Calu3 (cell line): ENCODE measurements at regions of chr6 and their contacts with region 1.

Region 1: DNA sequence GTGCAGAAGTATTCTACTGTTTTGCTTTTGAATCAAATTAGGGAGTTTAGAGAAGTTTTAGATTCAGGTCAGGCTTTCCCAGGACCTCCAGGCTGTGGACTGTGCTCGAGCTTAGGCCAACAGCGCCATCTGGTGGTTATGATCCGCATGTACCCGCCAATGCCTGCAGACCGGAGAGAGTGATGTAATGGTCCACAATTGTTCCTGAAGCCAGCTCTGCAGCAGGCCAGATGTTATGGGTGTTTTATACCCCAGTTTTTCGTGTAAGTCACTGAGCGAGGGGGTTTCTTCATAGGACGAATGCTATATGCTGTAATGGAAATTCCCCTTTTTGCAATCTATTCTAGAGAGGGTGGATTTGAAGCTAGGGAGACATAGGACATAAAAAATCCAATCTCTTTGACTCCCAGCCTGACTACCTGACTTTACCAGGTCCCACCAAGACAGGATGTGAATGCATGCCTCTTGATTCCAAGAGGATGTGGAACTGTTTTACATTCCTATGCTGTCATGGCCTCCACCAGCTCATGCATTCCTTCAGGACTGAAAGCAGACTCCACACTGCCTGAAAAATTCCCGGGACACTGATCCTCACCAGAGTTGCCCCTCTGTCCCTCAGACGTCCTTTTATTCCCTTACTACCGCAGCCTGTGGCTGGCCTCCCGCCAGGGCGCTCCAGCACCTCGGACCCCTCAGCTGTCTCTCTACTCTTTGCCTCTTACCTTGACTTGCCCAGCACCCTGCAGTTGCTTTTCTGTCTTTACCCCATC is 41.2 kb upstream of the LY86 start:
- DNase-seq: peak; percentile 81
- H3K4me3 Mint-ChIP-seq: peak overlapping the region; percentile 48
- H3K27ac Mint-ChIP-seq: peak overlapping the region; percentile 36
- H3K4me1 Mint-ChIP-seq: peaks cover 7% of the 10 kb centered on the region
- H3K27me3 Mint-ChIP-seq: peaks cover 74% of the 10 kb centered on the region
- CTCF ChIP-seq: peak; percentile 80

Region 2: DNA sequence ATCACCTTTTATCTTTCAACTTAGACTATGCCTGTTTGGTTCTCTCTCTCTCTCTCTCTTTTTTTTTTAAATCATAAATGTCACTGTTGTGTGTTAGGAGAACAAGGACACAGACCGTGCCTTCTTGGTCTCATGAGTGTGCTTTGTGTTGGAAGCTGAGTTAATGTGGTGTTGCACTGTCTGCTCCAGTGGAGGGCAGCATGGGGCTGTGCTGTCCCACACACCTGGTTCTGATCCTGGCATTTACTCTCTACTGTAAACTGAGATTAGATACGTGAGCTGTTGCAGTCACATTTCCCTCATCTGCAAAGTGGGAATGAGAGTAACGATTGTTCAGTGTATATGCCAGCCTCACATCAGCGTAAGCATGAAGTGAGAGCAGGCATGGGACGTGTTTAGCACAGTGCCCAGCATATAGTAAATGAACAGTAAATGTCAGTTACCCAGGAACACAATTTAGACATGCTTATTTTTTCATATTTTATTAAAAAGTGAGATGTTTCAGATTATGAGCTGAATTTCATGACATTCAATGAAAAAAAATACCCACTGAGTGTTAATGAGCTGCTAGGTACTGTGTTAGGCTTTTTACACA is 1124.9 kb before region 1 on chr6:
- CTCF ChIA-PET with region 1: no interaction called
- intact Hi-C with region 1: loop called (anchors 10 kb)
- DNase-seq: peak; percentile 19
- H3K4me3 Mint-ChIP-seq: no peak overlapping the region
- H3K27ac Mint-ChIP-seq: no peak overlapping the region
- H3K4me1 Mint-ChIP-seq: no peaks in the 10 kb centered on the region
- H3K27me3 Mint-ChIP-seq: no peaks in the 10 kb centered on the region
- CTCF ChIP-seq: no peak

Region 3: GRCh38 chr6:5968817-5969734 is 578.2 kb before region 1 on chr6:
- CTCF ChIA-PET with region 1: no interaction called
- intact Hi-C with region 1: loop called (anchors 5 kb)
- DNase-seq: peak; percentile 51
- H3K4me3 Mint-ChIP-seq: no peak overlapping the region
- H3K27ac Mint-ChIP-seq: no peak overlapping the region
- H3K4me1 Mint-ChIP-seq: peaks cover 11% of the 10 kb centered on the region
- H3K27me3 Mint-ChIP-seq: no peaks in the 10 kb centered on the region
- CTCF ChIP-seq: no peak

Region 4: DNA sequence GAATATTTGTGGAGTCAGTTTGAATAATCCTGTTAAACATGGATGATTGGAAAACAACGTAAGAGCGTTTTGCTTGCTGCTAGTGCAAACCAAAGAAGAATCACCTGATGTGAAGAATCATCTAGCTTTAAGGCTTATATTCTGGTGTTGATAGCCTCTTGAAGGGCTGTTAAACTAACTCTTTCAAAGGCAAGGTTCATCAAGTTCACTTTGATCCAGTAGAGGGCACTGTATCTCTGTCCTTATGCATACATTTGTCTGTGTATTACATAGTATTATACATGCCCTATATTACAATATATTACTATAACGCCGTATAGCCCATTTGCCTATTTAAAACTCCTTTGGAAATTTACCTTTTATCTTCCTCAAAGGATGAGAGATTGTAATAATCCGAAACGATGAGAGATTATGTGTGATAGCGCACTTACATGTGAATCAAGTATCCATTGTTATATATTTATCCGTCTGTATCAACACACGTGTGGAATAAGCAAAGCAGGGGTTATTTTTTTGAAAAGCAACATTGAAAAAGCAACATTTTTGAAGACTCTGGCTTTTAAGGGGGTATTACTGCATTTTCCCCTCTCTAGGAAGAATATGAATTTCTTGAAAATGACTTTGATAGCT is 489.8 kb before region 1 on chr6:
- CTCF ChIA-PET with region 1: no interaction called
- intact Hi-C with region 1: loop called (anchors 1 kb)
- DNase-seq: peak; percentile 4
- H3K4me3 Mint-ChIP-seq: no peak overlapping the region
- H3K27ac Mint-ChIP-seq: no peak overlapping the region
- H3K4me1 Mint-ChIP-seq: no peaks in the 10 kb centered on the region
- H3K27me3 Mint-ChIP-seq: peaks cover 15% of the 10 kb centered on the region
- CTCF ChIP-seq: peak; percentile 34

Region 5: GRCh38 chr6:6407071-6407741 is 140.1 kb before region 1 on chr6:
- CTCF ChIA-PET with region 1: no interaction called
- intact Hi-C with region 1: no loop called
- DNase-seq: no peak
- H3K4me3 Mint-ChIP-seq: no peak overlapping the region
- H3K27ac Mint-ChIP-seq: no peak overlapping the region
- H3K4me1 Mint-ChIP-seq: no peaks in the 10 kb centered on the region
- H3K27me3 Mint-ChIP-seq: peaks cover 15% of the 10 kb centered on the region
- CTCF ChIP-seq: no peak